ENCODE measurements at regions of chr2 and their contacts with region 1.

Region 1: DNA sequence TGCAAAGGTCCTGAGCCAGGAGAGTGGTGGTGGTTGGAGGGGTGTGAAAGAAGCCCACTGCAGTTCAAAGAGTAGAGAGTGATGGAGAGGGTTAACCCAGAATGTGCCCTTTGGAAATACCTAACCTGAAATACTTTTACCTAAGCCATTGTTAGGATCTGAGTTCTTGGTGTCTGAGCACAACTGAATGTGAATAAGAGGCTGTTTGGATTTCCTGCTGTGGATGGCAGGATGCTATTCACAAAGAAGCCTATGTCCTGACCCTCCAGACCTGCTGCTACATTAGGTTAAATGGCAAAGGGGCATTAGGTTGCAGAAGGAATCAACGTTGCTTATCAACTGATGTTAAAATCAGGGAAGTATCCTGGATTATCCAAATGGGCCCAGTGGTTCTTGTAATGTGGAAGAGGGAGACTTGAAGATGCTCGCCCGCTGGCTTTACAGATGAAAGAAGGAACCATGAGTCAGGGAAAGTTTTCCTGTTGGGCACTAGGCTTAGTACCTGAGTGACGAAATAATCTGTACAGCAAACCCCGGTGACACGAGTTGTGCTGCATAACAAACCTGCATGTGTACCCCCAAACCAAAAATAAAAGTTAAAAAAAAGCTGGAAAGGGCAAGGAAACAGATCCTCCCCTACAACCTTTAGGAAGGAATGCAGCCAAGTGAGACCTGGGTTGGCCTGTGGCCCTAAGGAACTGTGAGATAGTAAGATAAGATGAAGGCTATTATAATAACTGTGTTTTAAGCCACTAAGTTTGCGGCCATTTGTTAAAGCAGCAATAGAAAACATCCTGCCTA is 27.2 kb downstream of the ITGA6 start:
- DNase-seq: no peak
- ATAC-seq: no peak

Region 2: GRCh38 chr2:172437419-172438341 is 16.9 kb before region 1 on chr2:
- intact Hi-C with region 1: loop called (anchors 1 kb)
- DNase-seq: no peak
- ATAC-seq: no peak

Measured in left ventricle myocardium superior (tissue), 1 donor.